Activated B cell treated with CpG ODN at 0.5 μM for 24 hours (primary cell): ENCODE measurements at regions of chr12 and their contacts with region 1.

Region 1: GRCh38 chr12:43805860-43806736 is at the start of gene TWF1:
- DNase-seq: peak; percentile 94
- ATAC-seq: peak; percentile 92
- H3K4me3 Mint-ChIP-seq: peak within 1 kb of the TSS; percentile 100
- H3K27ac Mint-ChIP-seq: peak within 1 kb of the TSS; percentile 100
- H3K4me1 Mint-ChIP-seq: peaks cover 31% of the 10 kb centered on the region
- H3K27me3 Mint-ChIP-seq: no peaks in the 10 kb centered on the region
- CTCF ChIP-seq: no peak
- total RNA-seq, gene TWF1: 26.8 and 28.2 TPM in 2 replicates

Region 2: DNA sequence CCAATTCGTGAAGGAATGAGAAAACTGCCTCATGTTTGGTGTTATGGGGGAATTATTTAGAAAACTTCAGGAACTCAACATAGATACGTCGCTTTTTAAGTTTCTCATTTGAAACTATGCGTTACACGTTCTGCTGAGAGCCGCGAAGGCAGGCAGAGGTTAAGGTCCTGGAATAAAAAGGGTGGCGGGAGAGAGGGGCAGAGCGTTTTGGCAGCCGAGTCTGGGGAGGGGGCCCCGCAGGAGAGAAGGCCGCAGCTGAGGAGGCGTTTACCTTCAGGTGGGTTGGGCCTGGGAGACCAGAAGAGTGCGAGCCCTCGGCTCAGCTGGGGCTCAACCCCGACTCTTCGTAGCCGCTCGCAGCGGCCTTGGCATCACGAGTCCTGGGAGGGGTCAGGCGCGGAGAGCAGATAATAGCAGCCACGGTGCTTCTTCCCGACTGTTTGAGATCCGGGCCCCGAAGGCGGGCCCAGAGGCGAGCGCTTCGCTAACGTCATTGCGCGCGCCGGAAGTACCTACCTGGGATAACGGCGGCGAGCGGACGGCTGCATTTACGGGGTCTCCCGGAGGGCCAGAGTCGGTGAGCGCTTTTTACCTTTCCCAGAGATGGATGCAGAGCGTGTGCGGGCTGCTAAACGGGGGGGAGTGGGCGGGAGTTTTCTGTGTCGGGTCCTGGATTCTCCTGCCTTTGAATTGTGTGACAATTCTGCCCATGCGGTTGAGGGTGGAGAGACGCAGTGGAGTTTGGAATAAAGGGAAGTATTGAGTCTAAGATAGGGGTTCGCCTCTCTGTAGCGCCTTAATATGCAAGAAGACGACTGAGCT is 1480.2 kb before region 1 on chr12 and contains the starts of genes PPHLN1 and ZCRB1:
- CTCF ChIA-PET with region 1: no interaction called
- POLR2A ChIA-PET with region 1: no interaction called
- intact Hi-C with region 1: loop called (anchors 1 kb)
- DNase-seq: peak; percentile 73
- ATAC-seq: peak; percentile 89
- H3K4me3 Mint-ChIP-seq: peak within 1 kb of the TSS; percentile 94
- H3K27ac Mint-ChIP-seq: peak within 1 kb of the TSS; percentile 90
- H3K4me1 Mint-ChIP-seq: peaks cover 51% of the 10 kb centered on the region
- H3K27me3 Mint-ChIP-seq: no peaks in the 10 kb centered on the region
- CTCF ChIP-seq: no peak
- total RNA-seq, gene PPHLN1: 94.0 and 95.9 TPM in 2 replicates
- total RNA-seq, gene ZCRB1: 37.4 and 37.6 TPM in 2 replicates

Region 3: GRCh38 chr12:43758728-43759563 is 47.2 kb before region 1 on chr12 and contains the starts of genes IRAK4 and PUS7L:
- CTCF ChIA-PET with region 1: no interaction called
- POLR2A ChIA-PET with region 1: interaction called, 50 read pairs
- intact Hi-C with region 1: loop called (anchors 1 kb)
- DNase-seq: peak; percentile 83
- ATAC-seq: peak; percentile 98
- H3K4me3 Mint-ChIP-seq: peak within 1 kb of the TSS; percentile 98
- H3K27ac Mint-ChIP-seq: peak within 1 kb of the TSS; percentile 97
- H3K4me1 Mint-ChIP-seq: peaks cover 68% of the 10 kb centered on the region
- H3K27me3 Mint-ChIP-seq: no peaks in the 10 kb centered on the region
- CTCF ChIP-seq: no peak
- total RNA-seq, gene IRAK4: 38.4 and 40.8 TPM in 2 replicates
- total RNA-seq, gene PUS7L: 16.1 and 19.9 TPM in 2 replicates

Region 4: GRCh38 chr12:43789941-43790340 is 16.2 kb before region 1 on chr12:
- CTCF ChIA-PET with region 1: no interaction called
- POLR2A ChIA-PET with region 1: interaction called, 4 read pairs
- intact Hi-C with region 1: loop called (anchors 2 kb)
- DNase-seq: no peak
- ATAC-seq: no peak
- H3K4me3 Mint-ChIP-seq: no peak overlapping the region
- H3K27ac Mint-ChIP-seq: no peak overlapping the region
- H3K4me1 Mint-ChIP-seq: peaks cover 5% of the 10 kb centered on the region
- H3K27me3 Mint-ChIP-seq: no peaks in the 10 kb centered on the region
- CTCF ChIP-seq: no peak

Region 5: GRCh38 chr12:43835656-43836474 is 29.8 kb after region 1 on chr12 and contains the start of gene TMEM117:
- CTCF ChIA-PET with region 1: interaction called, 3 read pairs
- POLR2A ChIA-PET with region 1: interaction called, 45 read pairs
- intact Hi-C with region 1: loop called (anchors 1 kb)
- DNase-seq: peak; percentile 72
- ATAC-seq: peak; percentile 77
- H3K4me3 Mint-ChIP-seq: peak within 1 kb of the TSS; percentile 86
- H3K27ac Mint-ChIP-seq: peak within 1 kb of the TSS; percentile 84
- H3K4me1 Mint-ChIP-seq: peaks cover 17% of the 10 kb centered on the region
- H3K27me3 Mint-ChIP-seq: no peaks in the 10 kb centered on the region
- CTCF ChIP-seq: no peak
- total RNA-seq, gene TMEM117: 3.5 and 4.8 TPM in 2 replicates